ENCODE measurements at regions of chr4 and their contacts with region 1.

Region 1: DNA sequence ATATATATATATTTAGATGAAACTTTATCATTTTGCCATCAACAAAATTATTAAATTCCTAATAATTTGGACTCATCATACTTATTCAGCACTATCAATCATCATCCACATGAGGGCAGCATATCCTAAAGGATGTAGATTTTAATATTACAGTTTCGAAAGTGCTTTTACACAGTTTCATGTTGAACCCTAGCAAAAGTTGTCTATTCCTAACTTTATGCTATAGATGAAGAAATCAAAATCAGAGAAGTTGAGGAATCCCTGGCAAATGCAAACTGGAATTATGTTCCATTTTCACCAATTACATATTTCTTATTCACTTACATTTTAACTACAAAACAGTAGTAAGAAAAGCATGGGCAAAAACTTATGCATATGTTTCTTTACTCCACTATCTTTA is 36.6 kb upstream of the UGT2A1 start:
- DNase-seq: peak; percentile 58
- H3K4me3 ChIP-seq: no peak overlapping the region
- H3K27ac ChIP-seq: no peak overlapping the region
- H3K4me1 ChIP-seq: no peaks in the 10 kb centered on the region
- H3K27me3 ChIP-seq: no peaks in the 10 kb centered on the region
- CTCF ChIP-seq: peak; percentile 49; the same call in 1 of the 2 replicates

Region 2: GRCh38 chr4:69640289-69640688 is 49.3 kb before region 1 on chr4:
- CTCF ChIA-PET with region 1: no interaction called
- POLR2A ChIA-PET with region 1: no interaction called
- intact Hi-C with region 1: no loop called
- DNase-seq: no peak
- H3K4me3 ChIP-seq: no peak overlapping the region
- H3K27ac ChIP-seq: no peak overlapping the region
- H3K4me1 ChIP-seq: no peaks in the 10 kb centered on the region
- H3K27me3 ChIP-seq: no peaks in the 10 kb centered on the region
- CTCF ChIP-seq: no peak

Region 3: DNA sequence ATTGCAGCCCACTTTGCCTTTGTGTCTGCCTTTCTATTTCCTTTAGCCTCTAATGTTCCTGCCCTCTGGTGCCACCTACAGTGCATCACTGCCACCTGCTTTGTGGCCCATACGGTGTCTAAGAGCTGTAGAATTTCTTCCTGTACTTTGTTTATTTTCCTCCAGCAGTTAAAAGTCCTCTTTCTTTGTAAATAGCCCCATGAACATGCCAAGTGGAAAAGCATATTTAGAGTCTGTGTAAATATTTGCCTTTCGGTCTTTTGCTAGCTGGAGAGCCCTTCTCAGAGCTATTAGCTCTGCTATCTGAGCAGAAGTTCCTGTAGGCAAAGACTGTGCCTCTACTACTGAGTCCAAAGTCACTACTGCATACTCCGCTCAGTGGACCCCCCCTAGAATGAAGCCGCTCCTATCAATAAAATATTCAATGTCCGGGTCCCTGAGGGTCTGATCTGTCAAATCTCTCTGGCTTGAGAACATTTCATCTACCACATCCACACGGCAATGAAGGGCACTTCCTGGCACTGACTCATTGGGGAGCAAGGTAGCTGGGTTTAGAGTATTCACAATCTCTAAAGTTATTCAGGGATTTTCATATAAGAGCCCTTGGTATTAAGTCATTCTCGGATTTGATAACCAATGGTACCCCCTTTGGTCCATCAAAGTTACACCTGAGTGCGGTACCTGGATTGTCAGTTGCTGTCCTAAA is 134.0 kb after region 1 on chr4:
- CTCF ChIA-PET with region 1: interaction called, 4 read pairs
- POLR2A ChIA-PET with region 1: no interaction called
- intact Hi-C with region 1: loop called (anchors 5 kb)
- DNase-seq: peak; percentile 48
- H3K4me3 ChIP-seq: no peak overlapping the region
- H3K27ac ChIP-seq: no peak overlapping the region
- H3K4me1 ChIP-seq: no peaks in the 10 kb centered on the region
- H3K27me3 ChIP-seq: no peaks in the 10 kb centered on the region
- CTCF ChIP-seq: peak; percentile 59

Region 4: DNA sequence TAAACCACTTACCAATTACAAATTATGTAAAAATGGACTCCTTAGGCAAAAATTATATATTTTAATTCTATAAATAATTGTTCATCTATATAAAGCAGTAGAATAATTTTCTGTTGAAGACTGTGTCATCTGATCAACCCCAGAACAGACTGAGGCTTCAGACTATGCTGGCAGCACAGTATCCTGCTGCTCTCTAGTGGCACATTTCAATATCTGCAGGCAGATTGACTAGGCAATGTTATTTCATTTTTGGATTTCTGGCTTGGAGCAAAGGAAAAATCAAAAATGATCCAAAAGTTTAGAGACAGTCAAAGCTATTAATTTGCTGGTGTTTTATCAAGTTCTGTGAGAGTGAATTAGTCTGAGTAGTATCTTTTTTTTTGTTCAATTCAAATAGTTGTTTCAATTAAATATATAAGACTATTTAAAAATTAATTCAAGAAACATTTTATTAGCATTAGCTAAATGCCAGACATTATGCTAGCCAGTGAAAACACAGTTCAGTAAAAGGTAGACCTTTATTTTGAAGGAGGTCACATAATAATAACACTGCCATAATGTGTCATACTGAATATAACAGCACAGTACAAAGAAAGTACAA is 191.7 kb after region 1 on chr4:
- CTCF ChIA-PET with region 1: no interaction called
- POLR2A ChIA-PET with region 1: no interaction called
- intact Hi-C with region 1: loop called (anchors 1 kb)
- DNase-seq: peak; percentile 52
- H3K4me3 ChIP-seq: no peak overlapping the region
- H3K27ac ChIP-seq: no peak overlapping the region
- H3K4me1 ChIP-seq: no peaks in the 10 kb centered on the region
- H3K27me3 ChIP-seq: no peaks in the 10 kb centered on the region
- CTCF ChIP-seq: peak; percentile 74

Region 5: GRCh38 chr4:70062000-70062399 is 372.4 kb after region 1 on chr4:
- CTCF ChIA-PET with region 1: no interaction called
- POLR2A ChIA-PET with region 1: no interaction called
- intact Hi-C with region 1: no loop called
- DNase-seq: no peak
- H3K4me3 ChIP-seq: no peak overlapping the region
- H3K27ac ChIP-seq: no peak overlapping the region
- H3K4me1 ChIP-seq: no peaks in the 10 kb centered on the region
- H3K27me3 ChIP-seq: no peaks in the 10 kb centered on the region
- CTCF ChIP-seq: no peak

Region 6: DNA sequence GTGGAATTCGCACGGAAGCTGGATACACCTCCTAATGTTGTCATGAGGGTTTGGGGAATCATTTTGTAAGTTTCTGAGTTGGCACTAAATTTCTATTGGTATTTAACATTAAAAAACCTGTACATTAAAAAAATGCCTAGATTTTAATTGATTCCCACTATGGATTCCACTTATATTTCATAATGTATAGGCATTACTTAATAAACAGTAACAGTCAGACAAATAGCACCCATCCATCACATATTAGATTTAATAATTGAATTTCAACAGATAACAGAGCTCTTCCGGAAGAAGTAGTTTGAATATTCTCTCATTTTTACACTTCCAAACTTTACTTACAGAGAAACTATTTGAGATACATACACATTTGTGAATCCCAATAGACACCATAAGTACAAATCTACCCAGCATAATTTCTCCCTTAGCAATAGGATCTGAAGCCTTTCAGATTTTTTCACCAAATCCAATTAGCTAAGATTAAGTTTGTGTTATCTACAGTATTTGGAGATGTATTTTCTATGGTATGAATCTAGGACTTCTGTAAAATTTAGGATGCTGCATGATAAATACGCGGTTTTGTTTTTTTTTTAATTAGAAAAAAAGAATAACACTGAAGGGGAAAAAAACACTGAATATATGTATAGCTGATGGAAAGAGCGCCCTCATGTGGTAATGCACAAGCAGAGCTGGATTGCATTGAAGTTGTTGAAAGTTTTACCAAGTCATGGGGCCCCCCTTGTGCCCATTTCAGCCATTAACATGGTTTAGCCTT is 493.8 kb after region 1 on chr4:
- CTCF ChIA-PET with region 1: no interaction called
- POLR2A ChIA-PET with region 1: no interaction called
- intact Hi-C with region 1: loop called (anchors 1 kb)
- DNase-seq: peak; percentile 46
- H3K4me3 ChIP-seq: no peak overlapping the region
- H3K27ac ChIP-seq: no peak overlapping the region
- H3K4me1 ChIP-seq: no peaks in the 10 kb centered on the region
- H3K27me3 ChIP-seq: no peaks in the 10 kb centered on the region
- CTCF ChIP-seq: peak; percentile 65

Region 7: GRCh38 chr4:70515367-70516245 is 826.0 kb after region 1 on chr4:
- CTCF ChIA-PET with region 1: no interaction called
- POLR2A ChIA-PET with region 1: no interaction called
- intact Hi-C with region 1: loop called (anchors 10 kb)
- DNase-seq: no peak
- H3K4me3 ChIP-seq: no peak overlapping the region
- H3K27ac ChIP-seq: no peak overlapping the region
- H3K4me1 ChIP-seq: no peaks in the 10 kb centered on the region
- H3K27me3 ChIP-seq: no peaks in the 10 kb centered on the region
- CTCF ChIP-seq: no peak

Measured in A673 (cell line).